Naive thymus-derived CD4-positive, alpha-beta T cell (primary cell): ENCODE measurements at regions of chrX and their contacts with region 1.

Region 1: DNA sequence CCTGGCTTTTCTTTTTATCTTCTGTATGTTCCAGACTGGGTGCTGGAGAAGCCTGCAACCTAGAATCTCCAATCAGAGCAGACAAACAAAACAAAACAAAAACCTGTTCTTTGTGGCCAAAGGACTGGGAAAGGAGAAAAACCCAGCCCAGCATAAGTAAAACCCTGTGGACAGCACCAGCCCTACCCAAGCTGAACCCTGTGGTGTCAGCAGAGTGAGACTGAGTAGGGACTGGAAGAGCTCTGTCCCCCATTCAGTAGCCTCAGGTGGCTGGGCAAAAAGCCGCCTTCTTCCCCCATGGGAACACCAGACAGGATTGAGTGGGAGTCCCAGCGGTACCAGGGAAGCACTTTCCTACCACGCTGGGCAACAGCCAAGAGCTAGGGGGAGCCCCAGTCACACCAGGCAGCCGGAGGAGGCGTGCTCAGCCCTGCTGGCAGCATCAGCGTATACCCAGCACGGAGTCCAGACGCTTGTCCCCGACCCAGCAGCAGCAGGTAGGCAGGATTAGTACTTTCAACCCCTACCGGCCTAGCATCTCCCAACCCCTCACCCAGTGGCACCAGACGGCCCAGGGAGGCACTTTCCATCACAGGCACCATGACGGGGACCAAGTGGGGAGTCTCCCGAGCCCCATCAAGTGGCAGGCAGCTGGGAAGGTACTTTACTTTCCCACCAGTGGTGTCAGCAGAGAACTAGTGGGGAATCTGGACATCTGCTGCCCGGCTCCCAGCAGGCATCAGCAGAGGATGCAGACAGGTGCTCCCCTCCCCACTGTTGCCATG is 8.6 kb upstream of the JADE3 start:
- DNase-seq: peak; percentile 15 to 57 (median 37)
- ATAC-seq: peak; percentile 95
- H3K4me3 ChIP-seq: peak overlapping the region; percentile 27
- H3K4me3 Mint-ChIP-seq: peak overlapping the region in 9 of 10 donors; percentile 25 to 77 (median 58)
- H3K27ac ChIP-seq: no peak overlapping the region
- H3K27ac Mint-ChIP-seq: no peak overlapping the region
- H3K4me1 ChIP-seq: no peaks in the 10 kb centered on the region
- H3K4me1 Mint-ChIP-seq: no peaks in the 10 kb centered on the region
- H3K27me3 ChIP-seq: no peaks in the 10 kb centered on the region
- H3K27me3 Mint-ChIP-seq: peaks cover 0 to 30% (median 0%) of the 10 kb centered on the region in 5 donors

Region 2: GRCh38 chrX:46978341-46979291 is 75.0 kb after region 1 on chrX:
- CTCF ChIA-PET with region 1: no interaction called
- POLR2A ChIA-PET with region 1: no interaction called
- intact Hi-C with region 1: loop called (anchors 1 kb)
- DNase-seq: peak; percentile 10 to 63 (median 40)
- ATAC-seq: peak; percentile 77
- H3K4me3 ChIP-seq: no peak overlapping the region
- H3K4me3 Mint-ChIP-seq: no peak overlapping the region
- H3K27ac ChIP-seq: no peak overlapping the region
- H3K27ac Mint-ChIP-seq: no peak overlapping the region
- H3K4me1 ChIP-seq: no peaks in the 10 kb centered on the region
- H3K4me1 Mint-ChIP-seq: no peaks in the 10 kb centered on the region
- H3K27me3 ChIP-seq: no peaks in the 10 kb centered on the region
- H3K27me3 Mint-ChIP-seq: peaks cover 0 to 13% (median 0%) of the 10 kb centered on the region in 5 donors

Region 3: GRCh38 chrX:47030339-47030738 is 126.7 kb after region 1 on chrX:
- CTCF ChIA-PET with region 1: interaction called, 3 read pairs
- POLR2A ChIA-PET with region 1: interaction called, 3 read pairs
- intact Hi-C with region 1: loop called (anchors 1 to 10 kb)
- DNase-seq: peak in 7 of 9 donors; percentile 2 to 37 (median 32)
- ATAC-seq: no peak
- H3K4me3 ChIP-seq: no peak overlapping the region
- H3K4me3 Mint-ChIP-seq: no peak overlapping the region
- H3K27ac ChIP-seq: no peak overlapping the region
- H3K27ac Mint-ChIP-seq: no peak overlapping the region
- H3K4me1 ChIP-seq: no peaks in the 10 kb centered on the region
- H3K4me1 Mint-ChIP-seq: no peaks in the 10 kb centered on the region
- H3K27me3 ChIP-seq: no peaks in the 10 kb centered on the region
- H3K27me3 Mint-ChIP-seq: no peaks in the 10 kb centered on the region

Region 4: DNA sequence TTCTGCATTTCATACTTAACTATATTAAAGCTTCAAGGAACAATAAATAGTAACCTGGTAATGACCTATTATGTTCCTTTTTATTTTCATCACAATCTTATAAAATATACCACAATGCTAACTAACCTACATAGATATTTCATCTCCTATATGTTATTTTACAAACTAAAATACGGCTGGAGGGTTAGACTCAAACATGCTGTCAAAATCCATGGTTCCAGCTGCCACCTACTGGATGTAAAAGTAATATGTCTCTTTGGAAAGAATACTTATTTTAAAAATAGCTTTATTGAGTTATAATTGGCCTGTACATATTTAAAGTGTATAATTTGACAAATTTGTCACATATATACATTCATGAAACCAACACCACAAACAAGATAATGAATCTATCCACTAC is 189.6 kb after region 1 on chrX:
- CTCF ChIA-PET with region 1: interaction called, 3 read pairs
- POLR2A ChIA-PET with region 1: no interaction called
- intact Hi-C with region 1: loop called (anchors 1 to 5 kb)
- DNase-seq: peak in 4 of 9 donors; percentile 1 to 19 (median 15)
- ATAC-seq: no peak
- H3K4me3 ChIP-seq: no peak overlapping the region
- H3K4me3 Mint-ChIP-seq: no peak overlapping the region
- H3K27ac ChIP-seq: no peak overlapping the region
- H3K27ac Mint-ChIP-seq: no peak overlapping the region
- H3K4me1 ChIP-seq: no peaks in the 10 kb centered on the region
- H3K4me1 Mint-ChIP-seq: peaks cover 0 to 17% (median 11%) of the 10 kb centered on the region in 7 donors
- H3K27me3 ChIP-seq: no peaks in the 10 kb centered on the region
- H3K27me3 Mint-ChIP-seq: no peaks in the 10 kb centered on the region

Region 5: DNA sequence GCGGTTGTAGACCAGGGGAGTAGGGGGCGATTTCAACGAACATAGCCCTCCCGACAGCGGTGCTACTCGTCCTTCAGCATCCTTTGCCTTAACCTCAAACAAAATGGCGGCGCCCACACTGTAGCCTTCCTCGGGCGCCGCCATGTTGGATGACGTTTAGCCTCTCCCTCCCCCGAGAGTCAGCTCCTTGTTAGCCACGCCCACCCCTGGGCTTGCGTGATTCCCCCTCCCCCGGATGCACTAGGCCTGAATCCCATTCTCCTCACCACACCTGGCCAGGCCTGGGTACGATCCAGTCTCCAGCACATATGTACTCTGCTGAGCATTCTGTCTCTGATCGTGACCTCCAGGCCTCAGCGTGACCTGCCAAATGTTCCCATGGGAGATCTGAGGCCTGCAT is 417.7 kb after region 1 on chrX:
- CTCF ChIA-PET with region 1: no interaction called
- POLR2A ChIA-PET with region 1: no interaction called
- intact Hi-C with region 1: no loop called
- DNase-seq: no peak
- ATAC-seq: no peak
- H3K4me3 ChIP-seq: no peak overlapping the region
- H3K4me3 Mint-ChIP-seq: no peak overlapping the region
- H3K27ac ChIP-seq: no peak overlapping the region
- H3K27ac Mint-ChIP-seq: no peak overlapping the region
- H3K4me1 ChIP-seq: no peaks in the 10 kb centered on the region
- H3K4me1 Mint-ChIP-seq: no peaks in the 10 kb centered on the region
- H3K27me3 ChIP-seq: no peaks in the 10 kb centered on the region
- H3K27me3 Mint-ChIP-seq: no peaks in the 10 kb centered on the region

Region 6: DNA sequence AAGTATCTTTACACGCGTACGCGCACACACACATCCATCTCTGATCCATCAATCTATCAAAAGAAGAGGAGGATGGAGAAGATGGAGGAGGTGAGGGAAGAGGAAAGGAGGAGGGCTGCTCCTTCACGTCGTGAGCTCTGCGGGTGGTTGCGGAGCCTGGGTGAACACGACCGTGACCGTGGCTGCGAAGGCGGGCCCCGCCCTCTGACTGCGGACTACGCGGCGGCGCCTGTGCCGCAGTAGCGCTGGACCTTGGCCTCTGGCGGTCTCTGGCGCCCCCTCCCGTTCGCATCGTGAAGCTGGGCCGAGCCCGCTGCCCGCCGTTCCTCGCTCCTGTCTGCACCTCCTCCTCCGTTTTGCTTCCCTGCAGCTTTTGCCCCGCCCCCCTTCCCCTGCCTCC is 619.6 kb after region 1 on chrX:
- CTCF ChIA-PET with region 1: no interaction called
- POLR2A ChIA-PET with region 1: no interaction called
- intact Hi-C with region 1: loop called in 1 of 2 experiments (anchors 5 kb)
- DNase-seq: peak; percentile 50 to 85 (median 66)
- ATAC-seq: peak; percentile 99
- H3K4me3 ChIP-seq: peak overlapping the region; percentile 43
- H3K4me3 Mint-ChIP-seq: peak overlapping the region; percentile 66 to 82 (median 74)
- H3K27ac ChIP-seq: peak overlapping the region; percentile 3
- H3K27ac Mint-ChIP-seq: peak overlapping the region in 3 of 9 donors; percentile 42 to 47 (median 43)
- H3K4me1 ChIP-seq: no peaks in the 10 kb centered on the region
- H3K4me1 Mint-ChIP-seq: peaks cover 0 to 8% (median 0%) of the 10 kb centered on the region in 7 donors
- H3K27me3 ChIP-seq: no peaks in the 10 kb centered on the region
- H3K27me3 Mint-ChIP-seq: peaks cover 0 to 2% (median 0%) of the 10 kb centered on the region in 5 donors